ENCODE measurements at regions of chr2 and their contacts with region 1.

Region 1: GRCh38 chr2:68709421-68709911 is 25.1 kb upstream of the ARHGAP25 start:
- DNase-seq: peak; percentile 32
- ATAC-seq: peak; percentile 84
- H3K4me3 Mint-ChIP-seq: no peak overlapping the region
- H3K27ac Mint-ChIP-seq: peak overlapping the region; percentile 63
- H3K4me1 Mint-ChIP-seq: peaks cover 26% of the 10 kb centered on the region
- H3K27me3 Mint-ChIP-seq: peaks cover 2% of the 10 kb centered on the region
- CTCF ChIP-seq: peak; percentile 87

Region 2: DNA sequence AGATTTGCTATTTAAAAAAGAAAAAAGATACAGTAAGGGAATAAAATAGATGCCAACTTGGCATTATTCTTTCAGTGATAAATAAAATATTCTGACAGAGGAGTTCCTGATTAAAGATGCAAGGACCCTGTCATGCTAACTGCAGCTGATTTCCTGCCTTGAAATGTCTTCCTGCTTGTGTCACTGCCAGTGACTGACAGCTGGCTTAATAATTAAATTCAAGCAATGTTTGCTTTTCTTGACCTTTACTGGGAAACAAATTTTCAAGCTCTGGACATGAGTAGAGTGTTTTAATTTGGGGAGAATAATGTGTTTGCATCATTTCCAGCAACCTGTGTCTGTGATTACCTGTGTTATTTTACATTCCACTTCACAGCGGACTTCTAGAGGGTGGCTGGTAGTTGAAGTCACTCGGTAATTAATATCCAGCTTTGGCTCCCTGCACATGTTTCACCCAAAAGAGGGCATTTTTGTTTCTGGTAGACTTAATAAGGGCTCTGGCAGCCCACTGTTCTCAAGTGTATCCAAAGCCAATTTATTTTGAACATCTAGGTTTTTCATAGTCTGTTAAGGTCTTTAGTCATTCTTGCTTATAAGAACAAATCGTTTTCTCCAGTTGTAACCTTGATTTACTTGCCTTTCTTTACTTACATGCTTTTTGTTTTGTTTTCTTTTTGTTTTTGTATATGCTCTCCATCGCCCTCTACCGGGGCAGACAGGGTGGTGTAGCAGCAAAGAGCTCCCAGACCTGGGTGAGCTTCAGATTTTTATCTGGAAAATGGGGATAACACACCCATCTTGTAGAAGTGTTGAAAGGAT is 114.6 kb before region 1 on chr2:
- CTCF ChIA-PET with region 1: interaction called, 26 read pairs
- POLR2A ChIA-PET with region 1: no interaction called
- intact Hi-C with region 1: no loop called
- DNase-seq: peak; percentile 71
- ATAC-seq: peak; percentile 74
- H3K4me3 Mint-ChIP-seq: no peak overlapping the region
- H3K27ac Mint-ChIP-seq: no peak overlapping the region
- H3K4me1 Mint-ChIP-seq: peaks cover 6% of the 10 kb centered on the region
- H3K27me3 Mint-ChIP-seq: peaks cover 6% of the 10 kb centered on the region
- CTCF ChIP-seq: peak; percentile 97

Region 3: GRCh38 chr2:68698567-68699377 is 10.7 kb before region 1 on chr2:
- CTCF ChIA-PET with region 1: interaction called, 14 read pairs
- POLR2A ChIA-PET with region 1: no interaction called
- intact Hi-C with region 1: no loop called
- DNase-seq: no peak
- ATAC-seq: no peak
- H3K4me3 Mint-ChIP-seq: no peak overlapping the region
- H3K27ac Mint-ChIP-seq: no peak overlapping the region
- H3K4me1 Mint-ChIP-seq: no peaks in the 10 kb centered on the region
- H3K27me3 Mint-ChIP-seq: peaks cover 4% of the 10 kb centered on the region
- CTCF ChIP-seq: no peak

Region 4: GRCh38 chr2:68734688-68735525 is 25.4 kb after region 1 on chr2 and contains the start of gene ARHGAP25:
- CTCF ChIA-PET with region 1: interaction called, 28 read pairs
- POLR2A ChIA-PET with region 1: interaction called, 111 read pairs
- intact Hi-C with region 1: no loop called
- DNase-seq: peak; percentile 81
- ATAC-seq: peak; percentile 72
- H3K4me3 Mint-ChIP-seq: no peak within 1 kb of the TSS
- H3K27ac Mint-ChIP-seq: no peak within 1 kb of the TSS
- H3K4me1 Mint-ChIP-seq: peaks cover 30% of the 10 kb centered on the region
- H3K27me3 Mint-ChIP-seq: no peaks in the 10 kb centered on the region
- CTCF ChIP-seq: no peak
- total RNA-seq, gene ARHGAP25: 59.3 to 61.5 TPM

Region 5: GRCh38 chr2:68766376-68766845 is 56.9 kb after region 1 on chr2:
- CTCF ChIA-PET with region 1: interaction called, 10 read pairs
- POLR2A ChIA-PET with region 1: no interaction called
- intact Hi-C with region 1: no loop called
- DNase-seq: peak; percentile 80
- ATAC-seq: peak; percentile 51
- H3K4me3 Mint-ChIP-seq: peak overlapping the region; percentile 68
- H3K27ac Mint-ChIP-seq: peak overlapping the region; percentile 99
- H3K4me1 Mint-ChIP-seq: peaks cover 94% of the 10 kb centered on the region
- H3K27me3 Mint-ChIP-seq: no peaks in the 10 kb centered on the region
- CTCF ChIP-seq: no peak

Region 6: DNA sequence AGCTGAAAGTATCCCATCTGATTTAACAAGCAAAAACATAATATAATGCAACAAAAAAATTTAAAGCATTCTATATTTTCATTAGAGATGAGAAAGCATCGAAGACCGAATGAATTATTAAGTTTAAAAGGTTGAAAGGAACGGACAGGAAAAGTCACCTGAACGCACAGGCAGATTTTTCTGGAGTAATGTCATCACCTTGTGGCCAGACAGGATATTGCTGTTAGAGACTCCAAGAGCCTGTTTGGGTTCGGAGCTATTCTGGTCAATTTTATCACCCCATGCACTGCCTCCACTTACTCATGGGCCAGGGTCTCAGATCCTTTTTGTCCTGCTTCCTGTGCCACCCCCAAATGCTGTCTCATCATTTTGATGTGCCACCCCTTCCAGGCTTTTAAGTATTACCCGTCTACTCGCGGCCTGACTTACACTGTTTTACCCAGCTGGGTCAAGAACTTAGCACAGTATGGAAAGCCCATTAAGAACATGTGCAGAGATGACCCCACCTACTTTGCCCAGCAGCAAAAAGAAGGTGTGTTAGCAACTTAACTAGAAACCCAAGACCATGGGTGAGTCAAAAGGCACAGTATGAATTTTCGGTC is 215.9 kb after region 1 on chr2:
- CTCF ChIA-PET with region 1: interaction called, 83 read pairs
- POLR2A ChIA-PET with region 1: no interaction called
- intact Hi-C with region 1: loop called (anchors 5 kb)
- DNase-seq: peak; percentile 67
- ATAC-seq: peak; percentile 87
- H3K4me3 Mint-ChIP-seq: no peak overlapping the region
- H3K27ac Mint-ChIP-seq: no peak overlapping the region
- H3K4me1 Mint-ChIP-seq: peaks cover 1% of the 10 kb centered on the region
- H3K27me3 Mint-ChIP-seq: peaks cover 2% of the 10 kb centered on the region
- CTCF ChIP-seq: peak; percentile 97

Measured in activated CD8-positive, alpha-beta T cell treated with anti-CD3 and anti-CD28 coated beads for 36 hours (primary cell).